Transverse colon (tissue), 4 donors: ENCODE measurements at regions of chr9 and their contacts with region 1.

Region 1: DNA sequence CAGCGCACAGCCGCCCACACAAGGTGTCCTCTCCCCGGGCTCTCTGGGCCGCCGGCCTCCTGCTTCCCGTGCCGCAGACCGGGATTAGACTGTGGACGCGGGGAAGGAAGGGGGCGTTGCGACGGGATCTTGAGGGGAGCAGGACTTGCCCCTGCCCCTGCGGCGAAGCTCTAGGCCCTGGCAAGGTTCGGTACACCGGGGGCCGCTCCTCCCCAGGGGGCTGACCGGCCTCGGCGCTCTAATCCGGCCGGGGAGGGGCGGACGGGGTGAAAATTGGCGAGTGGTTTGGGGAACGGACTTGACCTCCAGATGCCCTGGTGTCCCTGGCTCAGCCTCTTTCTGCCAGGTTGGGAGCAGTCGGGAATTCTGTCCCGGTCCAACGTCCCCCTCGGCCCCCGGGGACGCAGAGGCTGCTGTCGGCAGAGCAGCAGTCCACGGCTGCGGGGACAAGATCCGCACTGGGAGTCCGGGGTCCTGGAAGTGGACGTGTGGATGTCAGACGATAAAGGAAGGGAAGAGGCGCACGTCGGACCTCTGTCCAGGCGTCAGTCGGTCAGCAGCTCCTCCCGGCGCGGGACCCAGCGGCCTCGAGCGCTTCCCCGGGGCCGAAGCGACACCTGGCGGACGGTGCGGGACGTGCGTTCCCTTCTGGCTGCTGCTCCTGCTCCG is 1.9 kb upstream of the CNTFR start:
- DNase-seq: peak; percentile 89
- H3K4me3 ChIP-seq: peak overlapping the region in 3 of 4 donors; percentile 1 to 59 (median 17)
- H3K27ac ChIP-seq: peak overlapping the region in 2 of 4 donors; percentile 7 to 54
- H3K4me1 ChIP-seq: peaks cover 14 to 50% (median 33%) of the 10 kb centered on the region in 4 donors
- H3K27me3 ChIP-seq: peaks cover 79% of the 10 kb centered on the region
- CTCF ChIP-seq: peak; percentile 91 to 96 (median 93)
- EP300 ChIP-seq: no peak
- POLR2A ChIP-seq: no peak

Region 2: GRCh38 chr9:34332076-34332964 is 259.1 kb before region 1 on chr9:
- in situ Hi-C with region 1: no loop called
- intact Hi-C with region 1: loop called (anchors 10 kb)
- DNase-seq: no peak
- H3K4me3 ChIP-seq: no peak overlapping the region
- H3K27ac ChIP-seq: peak overlapping the region in 1 of 4 donors; percentile 46
- H3K4me1 ChIP-seq: peaks cover 13 to 20% (median 14%) of the 10 kb centered on the region in 4 donors
- H3K27me3 ChIP-seq: no peaks in the 10 kb centered on the region
- CTCF ChIP-seq: peak; percentile 48 to 69 (median 54)
- EP300 ChIP-seq: no peak
- POLR2A ChIP-seq: no peak

Region 3: DNA sequence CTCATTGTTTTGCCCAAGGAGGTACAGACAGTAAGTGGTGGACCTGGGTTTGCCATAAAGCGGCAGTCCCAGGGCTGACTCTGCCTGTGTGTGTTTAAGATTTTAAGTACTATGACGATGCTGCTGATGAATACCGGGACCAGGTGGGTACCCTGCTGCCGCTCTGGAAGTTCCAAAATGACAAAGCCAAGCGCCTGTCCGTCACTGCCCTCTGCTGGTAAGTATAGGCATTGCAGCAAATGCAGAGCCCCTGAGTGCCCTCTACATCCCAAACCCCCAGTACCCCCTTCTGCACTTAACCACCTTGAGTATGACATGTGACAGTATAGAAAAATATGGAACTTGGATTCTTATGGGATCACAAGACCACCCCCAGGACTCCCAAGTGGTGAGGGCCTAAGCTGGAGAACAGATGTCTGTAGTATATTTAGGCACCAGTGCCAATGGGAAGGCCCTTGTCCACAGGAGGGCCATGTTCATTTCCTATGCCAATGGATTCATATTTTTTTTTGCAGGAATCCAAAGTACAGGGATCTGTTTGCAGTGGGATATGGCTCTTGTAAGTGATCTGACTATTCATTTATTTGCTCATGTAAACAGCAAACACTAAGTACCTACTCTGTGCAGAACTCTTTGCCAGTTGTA is 90.6 kb before region 1 on chr9:
- in situ Hi-C with region 1: no loop called
- intact Hi-C with region 1: loop called (anchors 10 kb)
- DNase-seq: peak; percentile 58
- H3K4me3 ChIP-seq: no peak overlapping the region
- H3K27ac ChIP-seq: no peak overlapping the region
- H3K4me1 ChIP-seq: peaks cover 0 to 11% (median 4%) of the 10 kb centered on the region in 4 donors
- H3K27me3 ChIP-seq: no peaks in the 10 kb centered on the region
- CTCF ChIP-seq: peak; percentile 90 to 99 (median 98)
- EP300 ChIP-seq: no peak
- POLR2A ChIP-seq: no peak

Region 4: DNA sequence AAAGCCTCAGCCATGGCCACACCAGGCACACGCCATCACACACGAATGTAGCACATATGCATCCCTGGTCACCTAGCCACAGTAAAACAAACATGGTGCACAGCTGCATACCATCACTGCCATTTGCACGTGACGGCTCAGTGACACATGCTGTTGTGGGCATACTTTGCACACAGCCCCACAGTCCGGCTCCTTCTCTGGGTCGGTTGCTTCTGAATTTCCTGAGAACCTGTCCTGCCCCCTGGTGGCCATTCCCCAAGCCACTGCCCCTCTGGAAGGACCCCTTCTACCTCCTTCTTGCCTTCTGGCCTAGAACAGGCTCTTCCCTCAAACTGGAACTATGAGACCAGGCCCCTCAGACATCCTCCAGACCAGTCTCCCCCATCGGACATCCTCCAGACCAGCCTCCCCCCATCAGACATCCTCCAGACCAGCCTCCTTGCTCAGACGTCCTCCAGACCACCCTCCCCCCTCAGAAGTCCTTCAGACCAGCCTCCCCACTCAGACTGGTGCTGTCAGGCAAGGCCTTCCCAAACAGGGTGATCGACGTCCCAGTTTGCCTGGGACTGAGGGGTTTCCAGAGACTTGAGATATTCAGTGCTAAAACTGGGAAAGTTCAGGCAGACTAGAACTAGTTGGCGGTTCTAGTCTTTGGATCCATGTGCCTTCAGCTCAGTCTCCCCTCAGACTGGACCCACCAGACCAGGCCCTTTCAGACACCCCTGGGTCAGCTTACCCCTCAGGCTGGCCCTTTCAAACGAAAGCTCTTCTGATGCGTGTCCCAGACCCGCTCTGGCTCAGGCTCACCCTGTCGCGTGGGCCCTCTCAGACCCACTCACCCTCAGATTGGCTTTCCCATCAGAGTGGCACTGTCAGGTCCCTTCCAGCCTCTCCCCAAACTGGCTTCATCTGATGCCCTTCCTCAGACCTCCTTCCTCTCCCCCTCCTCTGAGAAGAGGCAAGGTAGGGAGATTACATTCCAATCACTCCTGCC is 44.3 kb before region 1 on chr9:
- in situ Hi-C with region 1: loop called in 2 of 4 experiments (anchors 5 to 10 kb)
- intact Hi-C with region 1: loop called (anchors 2 kb)
- DNase-seq: peak; percentile 64
- H3K4me3 ChIP-seq: no peak overlapping the region
- H3K27ac ChIP-seq: no peak overlapping the region
- H3K4me1 ChIP-seq: peaks cover 0 to 3% (median 0%) of the 10 kb centered on the region in 4 donors
- H3K27me3 ChIP-seq: peaks cover 7% of the 10 kb centered on the region
- CTCF ChIP-seq: peak; percentile 54 to 81 (median 69)
- EP300 ChIP-seq: no peak
- POLR2A ChIP-seq: no peak